Heart right ventricle (tissue), 16 donors: ENCODE measurements at regions of chrX and their contacts with region 1.

Region 1: GRCh38 chrX:48801280-48802088 is at the start of gene HDAC6:
- DNase-seq: peak; percentile 95 to 96
- ATAC-seq: peak; percentile 94 to 98 (median 96)
- H3K4me3 ChIP-seq: peak within 1 kb of the TSS; percentile 35 to 82 (median 65)
- H3K27ac ChIP-seq: peak within 1 kb of the TSS; percentile 84 to 97 (median 94)
- H3K4me1 ChIP-seq: peaks cover 0 to 16% (median 0%) of the 10 kb centered on the region in 9 donors
- H3K27me3 ChIP-seq: no peaks in the 10 kb centered on the region
- CTCF ChIP-seq: peak in 1 of 9 donors; percentile 5
- total RNA-seq, gene HDAC6: 28.4 to 45.6 (median 32.3) TPM

Region 2: GRCh38 chrX:48558271-48558670 is 243.2 kb before region 1 on chrX:
- intact Hi-C with region 1: no loop called
- DNase-seq: no peak
- ATAC-seq: peak in 6 of 8 donors; percentile 56 to 91 (median 72)
- H3K4me3 ChIP-seq: no peak overlapping the region
- H3K27ac ChIP-seq: no peak overlapping the region
- H3K4me1 ChIP-seq: peaks cover 0 to 7% (median 0%) of the 10 kb centered on the region in 9 donors
- H3K27me3 ChIP-seq: no peaks in the 10 kb centered on the region
- CTCF ChIP-seq: no peak

Region 3: GRCh38 chrX:48676106-48676892 is 125.2 kb before region 1 on chrX:
- intact Hi-C with region 1: loop called in 2 of 10 experiments (anchors 5 to 10 kb)
- DNase-seq: peak; percentile 86 to 90
- ATAC-seq: peak; percentile 97 to 100 (median 99)
- H3K4me3 ChIP-seq: peak overlapping the region; percentile 65 to 85 (median 76)
- H3K27ac ChIP-seq: peak overlapping the region; percentile 77 to 94 (median 91)
- H3K4me1 ChIP-seq: peaks cover 0 to 16% (median 0%) of the 10 kb centered on the region in 9 donors
- H3K27me3 ChIP-seq: no peaks in the 10 kb centered on the region
- CTCF ChIP-seq: no peak

Region 4: DNA sequence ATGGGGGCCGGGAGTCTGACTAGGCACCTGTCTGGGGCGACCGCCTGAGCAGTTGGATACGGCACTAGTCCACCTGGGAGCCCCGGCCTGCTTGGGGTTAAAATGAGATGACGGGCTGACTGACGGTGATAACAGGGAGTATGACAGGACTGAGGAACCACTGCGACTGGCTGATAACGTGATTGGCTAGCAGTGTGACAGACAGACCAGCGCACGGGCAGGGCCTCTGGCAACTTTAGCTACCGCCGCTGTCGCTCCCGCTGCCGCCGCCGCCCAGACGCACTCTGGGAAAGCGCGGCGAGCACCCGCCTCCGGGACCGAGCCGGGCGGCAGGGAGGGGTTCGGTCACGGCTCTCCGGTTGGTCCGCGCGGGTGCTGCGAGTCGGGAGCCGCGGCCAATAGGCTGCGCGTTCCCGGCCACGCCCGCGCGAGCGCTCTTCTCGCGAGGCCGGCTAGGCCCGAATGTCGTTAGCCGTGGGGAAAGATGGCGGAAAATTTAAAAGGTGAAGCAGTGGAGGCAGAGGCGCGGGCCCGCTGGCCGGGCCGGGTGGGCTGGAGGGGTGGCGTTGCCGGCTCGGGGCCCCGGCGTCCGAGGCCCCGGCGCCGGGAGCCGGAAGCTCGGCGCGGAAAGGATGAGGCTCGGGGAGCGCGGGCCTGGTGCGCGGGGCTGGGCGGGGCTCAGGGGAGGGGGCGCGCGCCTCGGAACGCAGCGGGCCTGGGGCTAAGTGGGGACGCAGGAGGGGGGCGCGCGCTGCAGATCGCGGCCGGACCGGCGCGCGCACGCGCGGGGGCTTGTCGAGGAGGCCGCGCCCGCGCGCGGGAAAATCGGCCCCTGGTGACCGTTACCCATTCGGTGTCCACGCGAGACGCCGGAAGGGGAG is 104.9 kb before region 1 on chrX and contains the start of gene SUV39H1:
- intact Hi-C with region 1: loop called in 4 of 10 experiments (anchors 5 to 10 kb)
- DNase-seq: peak; percentile 86 to 88
- ATAC-seq: peak; percentile 96 to 99 (median 98)
- H3K4me3 ChIP-seq: peak within 1 kb of the TSS; percentile 38 to 67 (median 62)
- H3K27ac ChIP-seq: peak within 1 kb of the TSS; percentile 56 to 92 (median 86)
- H3K4me1 ChIP-seq: peaks cover 0 to 17% (median 4%) of the 10 kb centered on the region in 9 donors
- H3K27me3 ChIP-seq: peaks cover 0 to 10% (median 0%) of the 10 kb centered on the region in 7 donors
- CTCF ChIP-seq: no peak
- total RNA-seq, gene SUV39H1: 2.2 to 5.6 (median 3.1) TPM

Region 5: DNA sequence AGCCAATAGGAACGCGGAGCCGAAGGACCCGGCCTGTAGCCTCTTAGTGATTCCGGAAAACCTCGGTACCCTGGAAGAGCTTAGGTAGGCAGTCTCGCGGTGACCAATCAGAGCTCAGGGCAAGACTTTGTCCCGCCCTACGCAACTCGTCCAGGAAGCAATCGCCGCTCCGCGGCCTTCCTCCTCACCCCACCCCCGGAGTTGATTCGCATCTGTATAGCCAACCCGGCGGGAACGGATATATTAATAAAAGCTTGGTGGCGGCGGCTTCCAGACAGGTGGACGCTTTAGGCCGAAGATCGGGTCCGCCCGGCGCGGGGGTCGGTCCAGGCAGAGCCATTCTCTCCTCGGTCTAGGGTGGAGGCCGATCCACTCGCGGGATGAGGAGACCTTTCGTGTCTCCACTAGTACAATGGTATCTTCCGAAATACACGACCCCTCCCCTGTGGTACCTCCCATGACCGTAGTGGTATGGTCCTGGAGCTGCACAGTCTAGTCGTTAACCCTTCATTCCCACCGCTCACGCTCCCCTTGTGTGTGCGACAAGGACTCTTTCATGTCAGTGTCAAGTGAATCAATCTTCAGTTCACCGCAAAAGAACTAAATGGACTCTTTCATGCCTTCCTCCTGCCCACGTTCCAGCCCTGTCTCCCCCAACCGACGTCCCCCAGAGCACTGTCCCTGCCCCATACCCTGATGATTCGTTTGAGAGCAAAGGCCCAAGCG is 64.1 kb before region 1 on chrX:
- intact Hi-C with region 1: loop called in 3 of 10 experiments (anchors 2 to 10 kb)
- DNase-seq: peak; percentile 87 to 93
- ATAC-seq: peak; percentile 99 to 100 (median 100)
- H3K4me3 ChIP-seq: peak overlapping the region; percentile 35 to 75 (median 68)
- H3K27ac ChIP-seq: peak overlapping the region; percentile 73 to 95 (median 92)
- H3K4me1 ChIP-seq: peaks cover 0 to 14% (median 0%) of the 10 kb centered on the region in 9 donors
- H3K27me3 ChIP-seq: no peaks in the 10 kb centered on the region
- CTCF ChIP-seq: no peak

Region 6: DNA sequence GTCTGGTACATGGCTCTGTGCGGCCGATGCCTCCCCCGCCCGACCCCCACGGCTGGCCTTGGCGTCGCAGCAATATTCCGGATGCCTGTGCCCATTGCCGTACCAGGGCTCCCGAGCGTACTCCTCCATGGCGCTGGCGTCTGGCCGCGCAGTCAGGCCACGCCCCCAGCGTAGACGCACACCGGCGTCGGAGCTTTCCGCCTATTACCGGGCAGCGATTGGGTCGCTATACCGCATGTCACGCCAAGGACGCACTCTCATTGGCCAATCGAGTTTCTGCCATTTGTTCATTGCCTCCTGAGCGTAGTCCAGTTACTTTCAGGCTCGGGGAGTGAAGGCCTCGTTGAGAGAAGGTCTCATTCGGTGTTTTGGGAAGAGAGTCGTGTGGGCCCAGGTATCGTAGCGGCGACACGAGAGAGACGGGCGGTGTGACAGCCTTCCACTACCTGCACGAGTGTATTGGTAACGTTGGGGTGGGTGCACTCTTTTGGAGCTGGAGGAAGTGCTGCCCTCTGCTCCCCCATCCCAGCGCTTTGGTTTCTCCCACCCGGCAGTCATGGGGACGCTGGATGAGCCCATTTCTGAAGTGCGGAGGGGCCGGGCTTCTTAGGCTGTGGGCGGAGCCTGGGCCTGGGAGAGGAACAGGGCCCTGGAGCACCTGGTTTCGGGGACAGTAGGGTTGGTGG is 96.3 kb after region 1 on chrX and contains the starts of genes PQBP1 and TIMM17B:
- intact Hi-C with region 1: loop called in 3 of 10 experiments (anchors 5 to 10 kb)
- DNase-seq: peak; percentile 86 to 91
- ATAC-seq: peak; percentile 95 to 98 (median 97)
- H3K4me3 ChIP-seq: peak within 1 kb of the TSS; percentile 56 to 85 (median 74)
- H3K27ac ChIP-seq: peak within 1 kb of the TSS; percentile 87 to 97 (median 94)
- H3K4me1 ChIP-seq: peaks cover 0 to 24% (median 5%) of the 10 kb centered on the region in 9 donors
- H3K27me3 ChIP-seq: no peaks in the 10 kb centered on the region
- CTCF ChIP-seq: no peak
- total RNA-seq, gene PQBP1: 41.2 to 75.5 (median 52.8) TPM
- total RNA-seq, gene TIMM17B: 58.3 to 73.4 (median 64.7) TPM

Region 7: DNA sequence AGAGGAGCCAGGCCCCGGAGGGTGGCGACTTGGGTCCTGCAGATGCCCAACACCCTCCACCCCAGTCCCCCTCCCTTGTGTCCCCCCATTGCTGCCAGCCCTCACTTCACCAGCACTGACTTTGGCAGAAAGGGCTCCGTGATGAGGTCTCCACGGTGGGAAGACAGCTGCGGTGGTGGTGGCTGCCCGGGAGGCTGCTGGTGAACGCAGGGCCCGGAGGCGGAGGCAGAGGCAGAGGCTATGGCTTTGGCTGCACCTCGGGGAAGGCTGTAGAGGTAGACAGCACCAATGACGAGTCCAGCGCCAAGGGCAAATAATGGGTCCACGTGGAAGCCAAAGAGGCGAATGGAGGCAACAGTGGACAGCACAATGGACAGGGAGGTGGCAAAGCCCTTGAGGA is 103.1 kb after region 1 on chrX:
- intact Hi-C with region 1: loop called in 3 of 10 experiments (anchors 5 to 10 kb)
- DNase-seq: no peak
- ATAC-seq: peak in 1 of 8 donors; percentile 15
- H3K4me3 ChIP-seq: no peak overlapping the region
- H3K27ac ChIP-seq: no peak overlapping the region
- H3K4me1 ChIP-seq: peaks cover 0 to 3% (median 0%) of the 10 kb centered on the region in 9 donors
- H3K27me3 ChIP-seq: no peaks in the 10 kb centered on the region
- CTCF ChIP-seq: no peak

Region 8: DNA sequence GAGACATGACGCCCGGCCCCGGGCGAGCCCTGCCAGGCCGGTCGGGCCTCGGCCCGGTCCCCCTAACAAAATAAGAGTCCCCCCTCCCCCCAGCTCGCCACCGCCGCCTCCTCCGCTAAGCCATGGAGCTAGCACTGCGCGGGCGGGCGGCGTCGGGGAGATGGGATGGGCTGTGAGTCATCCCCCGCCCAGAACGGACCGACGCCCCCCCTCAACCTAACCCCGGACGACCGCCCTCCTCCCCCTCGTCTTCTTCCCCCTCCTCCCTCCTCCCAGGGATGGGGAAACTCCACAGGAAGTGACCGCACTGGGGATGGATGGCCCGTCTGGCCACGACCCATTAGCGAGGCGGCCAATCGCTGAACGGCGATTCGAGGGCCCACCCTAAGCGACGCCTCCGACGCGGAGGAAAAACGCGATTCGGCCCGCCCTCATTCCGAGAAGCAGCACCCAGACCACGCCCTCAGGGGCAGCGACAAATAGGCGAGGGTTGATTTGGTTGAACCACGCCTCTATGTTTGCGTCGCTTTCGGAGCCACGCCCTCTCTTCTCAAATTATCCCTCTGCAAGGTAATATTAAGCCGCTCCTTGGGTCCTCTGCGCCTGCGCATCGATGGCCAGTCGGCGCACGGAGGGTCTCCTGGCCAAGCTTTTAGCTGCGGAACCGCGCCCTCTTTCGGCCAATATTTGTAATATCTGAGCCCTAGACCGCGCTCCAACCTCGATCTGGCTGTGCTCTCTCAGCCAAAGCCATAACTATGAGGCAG is 241.9 kb after region 1 on chrX and contains the start of gene TFE3:
- intact Hi-C with region 1: loop called in 1 of 10 experiments (anchors 2 kb)
- DNase-seq: peak; percentile 95 to 98
- ATAC-seq: peak; percentile 91 to 96 (median 94)
- H3K4me3 ChIP-seq: peak within 1 kb of the TSS; percentile 64 to 92 (median 80)
- H3K27ac ChIP-seq: peak within 1 kb of the TSS; percentile 91 to 99 (median 96)
- H3K4me1 ChIP-seq: peaks cover 0 to 35% (median 15%) of the 10 kb centered on the region in 9 donors
- H3K27me3 ChIP-seq: no peaks in the 10 kb centered on the region
- CTCF ChIP-seq: peak; percentile 38 to 76 (median 64)
- total RNA-seq, gene TFE3: 13.8 to 29.1 (median 16.1) TPM